HAP-1 (cell line): ENCODE measurements at regions of chr7 and their contacts with region 1.

Region 1: GRCh38 chr7:30564243-30564892 is 30.3 kb upstream of the GARS1 start:
- DNase-seq: peak; percentile 74 to 90
- H3K4me3 ChIP-seq: no peak overlapping the region
- H3K4me1 ChIP-seq: no peaks in the 10 kb centered on the region
- H3K27me3 ChIP-seq: no peaks in the 10 kb centered on the region

Region 2: DNA sequence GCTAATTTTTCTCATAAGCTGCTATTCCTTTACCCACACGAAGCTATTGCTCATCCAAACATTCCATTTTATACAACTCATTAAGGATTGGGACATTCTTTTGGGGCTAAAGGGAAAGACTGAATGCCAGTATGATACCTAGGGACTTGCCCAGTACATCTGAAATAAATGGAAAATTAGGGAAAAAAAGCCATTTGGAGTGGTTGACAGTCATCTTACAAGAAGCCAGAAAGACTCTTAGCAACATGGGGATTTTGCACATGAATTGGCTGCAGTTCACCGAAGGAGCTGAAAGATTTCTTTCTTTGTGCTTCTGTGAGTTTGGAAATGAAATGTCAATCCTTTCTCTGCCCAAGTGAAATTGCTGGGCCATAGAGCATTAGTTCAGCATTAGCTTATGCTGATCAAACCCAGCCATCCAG is 472.9 kb before region 1 on chr7:
- in situ Hi-C with region 1: no loop called
- DNase-seq: no peak
- H3K4me3 ChIP-seq: no peak overlapping the region
- H3K4me1 ChIP-seq: no peaks in the 10 kb centered on the region
- H3K27me3 ChIP-seq: no peaks in the 10 kb centered on the region

Region 3: DNA sequence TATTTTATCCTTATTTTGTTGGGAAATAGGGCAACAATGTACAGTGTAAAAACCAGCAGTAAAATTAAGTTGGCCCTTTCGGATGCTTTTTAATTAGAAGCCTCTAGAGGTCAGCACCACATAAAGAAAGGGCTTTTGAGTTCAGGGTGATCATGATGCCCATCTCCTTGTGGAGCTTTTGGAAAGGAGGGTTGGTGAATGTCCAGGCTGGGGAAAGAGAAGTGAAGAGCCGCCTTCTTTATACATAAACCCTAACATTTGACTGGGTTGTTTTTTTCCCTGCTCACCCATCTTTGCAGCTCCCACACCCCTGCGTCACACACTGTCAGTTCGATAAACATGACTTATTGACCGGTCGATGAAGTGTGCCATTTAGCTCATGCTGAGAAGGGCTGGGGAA is 399.8 kb before region 1 on chr7:
- in situ Hi-C with region 1: loop called (anchors 10 kb)
- DNase-seq: peak; percentile 35 to 74
- H3K4me3 ChIP-seq: no peak overlapping the region
- H3K4me1 ChIP-seq: peaks cover 29% of the 10 kb centered on the region
- H3K27me3 ChIP-seq: no peaks in the 10 kb centered on the region

Region 4: DNA sequence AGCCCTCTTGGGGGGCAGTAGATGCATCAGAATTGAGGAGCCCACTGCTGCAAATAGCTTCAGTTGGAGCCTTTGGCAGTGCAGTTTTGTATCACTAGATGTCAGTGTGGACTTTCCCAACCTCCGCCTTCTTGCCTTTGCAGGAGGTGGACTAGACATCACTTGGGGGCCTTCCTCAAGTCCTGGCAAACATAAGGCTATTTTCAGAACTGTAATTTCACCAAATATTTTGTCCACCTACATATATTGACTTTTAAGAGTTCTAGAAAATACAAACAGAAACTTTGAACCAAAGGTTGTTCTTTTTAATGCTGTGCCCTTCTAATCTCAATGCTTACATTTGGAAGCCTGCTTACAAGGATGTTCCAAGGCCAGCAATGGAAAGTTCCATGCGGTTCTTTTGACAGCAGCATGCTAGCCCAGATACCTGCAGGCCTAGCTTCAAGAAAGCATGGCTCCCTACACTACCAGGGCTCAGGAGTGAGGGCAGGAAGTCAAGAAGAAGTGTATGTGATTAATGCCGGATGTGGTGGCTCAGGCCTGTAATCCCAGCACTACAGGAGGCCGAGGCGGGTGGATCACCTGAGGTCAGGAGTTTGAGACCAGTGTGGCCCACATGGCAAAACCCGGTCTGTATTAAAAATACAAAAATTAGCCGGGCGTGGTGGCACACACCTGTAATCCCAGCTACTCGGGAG is 288.0 kb before region 1 on chr7:
- in situ Hi-C with region 1: loop called (anchors 5 kb)
- DNase-seq: peak; percentile 66 to 71
- H3K4me3 ChIP-seq: no peak overlapping the region
- H3K4me1 ChIP-seq: no peaks in the 10 kb centered on the region
- H3K27me3 ChIP-seq: no peaks in the 10 kb centered on the region

Region 5: DNA sequence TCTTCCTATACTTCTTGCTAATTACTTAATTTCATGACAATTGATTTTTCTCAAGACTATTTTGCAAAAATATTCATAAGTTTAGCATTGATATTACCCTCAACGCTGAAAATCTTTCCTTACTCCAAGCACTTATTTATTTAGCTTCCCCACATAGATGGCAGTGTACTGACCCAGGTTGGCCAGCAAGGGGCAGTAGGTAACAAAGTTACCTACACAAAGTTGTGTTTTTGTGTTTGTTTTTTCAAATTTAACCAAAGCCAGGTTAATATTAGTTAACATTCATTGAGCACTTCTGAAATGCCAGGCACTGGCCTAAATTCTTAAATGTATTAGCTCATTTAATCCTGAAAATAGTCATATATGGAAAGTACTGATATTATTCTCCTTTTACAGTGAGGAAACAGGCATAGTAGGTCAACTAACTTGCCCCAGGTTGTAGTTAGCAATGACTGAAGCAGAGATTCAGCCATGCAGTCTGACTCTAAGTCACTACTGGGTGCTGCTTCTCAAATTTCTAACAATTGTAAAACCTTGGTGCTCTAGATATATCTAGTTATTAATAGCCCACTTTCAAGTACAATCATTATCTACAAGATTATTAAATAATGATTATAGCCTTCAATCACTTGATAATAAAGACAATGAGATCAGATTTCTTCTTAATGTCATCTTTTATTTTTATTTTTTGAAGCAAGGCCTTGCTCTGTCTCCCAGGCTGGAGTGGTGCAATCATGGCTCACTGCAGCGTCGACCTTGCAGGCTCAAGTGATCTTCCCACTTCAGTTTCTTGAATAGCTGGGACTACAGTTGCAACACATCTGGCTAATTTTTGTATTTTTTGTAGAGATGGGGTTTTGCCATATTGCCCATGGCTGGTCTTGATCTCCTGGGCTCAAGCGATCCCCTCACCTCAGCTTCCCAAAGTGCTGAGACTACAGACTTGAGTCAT is 54.0 kb before region 1 on chr7:
- in situ Hi-C with region 1: loop called (anchors 10 kb)
- DNase-seq: peak; percentile 52 to 62
- H3K4me3 ChIP-seq: no peak overlapping the region
- H3K4me1 ChIP-seq: peaks cover 3% of the 10 kb centered on the region
- H3K27me3 ChIP-seq: no peaks in the 10 kb centered on the region